Calu3 (cell line): ENCODE measurements at regions of chr2 and their contacts with region 1.

Region 1: DNA sequence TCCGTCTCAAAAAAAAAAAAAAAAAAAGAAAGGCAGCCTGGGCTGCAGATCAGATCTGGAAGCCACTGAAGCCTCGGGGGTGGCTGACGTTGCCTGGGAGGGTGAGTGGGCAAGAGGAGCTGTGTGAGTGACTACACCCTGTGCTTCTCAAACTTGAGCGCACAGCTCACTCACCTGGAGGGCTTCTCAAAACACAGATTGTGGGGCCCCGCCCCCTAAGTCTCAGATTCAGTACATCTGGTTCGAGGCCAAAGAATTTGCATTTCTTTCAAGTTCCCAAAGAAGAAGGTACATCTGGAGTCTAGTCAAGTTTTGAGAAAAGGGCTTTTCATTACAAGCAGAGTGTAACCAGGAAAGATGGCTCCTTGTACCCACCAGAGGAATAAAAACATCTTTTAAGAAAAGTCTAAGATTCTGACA is 97.7 kb upstream of the CAB39 start:
- DNase-seq: no peak
- H3K4me3 Mint-ChIP-seq: no peak overlapping the region
- H3K27ac Mint-ChIP-seq: no peak overlapping the region
- H3K4me1 Mint-ChIP-seq: peaks cover 9% of the 10 kb centered on the region
- H3K27me3 Mint-ChIP-seq: no peaks in the 10 kb centered on the region
- CTCF ChIP-seq: no peak

Region 2: GRCh38 chr2:230007931-230008707 is 606.8 kb before region 1 on chr2:
- CTCF ChIA-PET with region 1: interaction called, 3 read pairs
- intact Hi-C with region 1: loop called (anchors 1 kb)
- DNase-seq: peak; percentile 85
- H3K4me3 Mint-ChIP-seq: no peak overlapping the region
- H3K27ac Mint-ChIP-seq: no peak overlapping the region
- H3K4me1 Mint-ChIP-seq: peaks cover 18% of the 10 kb centered on the region
- H3K27me3 Mint-ChIP-seq: no peaks in the 10 kb centered on the region
- CTCF ChIP-seq: peak; percentile 86

Region 3: DNA sequence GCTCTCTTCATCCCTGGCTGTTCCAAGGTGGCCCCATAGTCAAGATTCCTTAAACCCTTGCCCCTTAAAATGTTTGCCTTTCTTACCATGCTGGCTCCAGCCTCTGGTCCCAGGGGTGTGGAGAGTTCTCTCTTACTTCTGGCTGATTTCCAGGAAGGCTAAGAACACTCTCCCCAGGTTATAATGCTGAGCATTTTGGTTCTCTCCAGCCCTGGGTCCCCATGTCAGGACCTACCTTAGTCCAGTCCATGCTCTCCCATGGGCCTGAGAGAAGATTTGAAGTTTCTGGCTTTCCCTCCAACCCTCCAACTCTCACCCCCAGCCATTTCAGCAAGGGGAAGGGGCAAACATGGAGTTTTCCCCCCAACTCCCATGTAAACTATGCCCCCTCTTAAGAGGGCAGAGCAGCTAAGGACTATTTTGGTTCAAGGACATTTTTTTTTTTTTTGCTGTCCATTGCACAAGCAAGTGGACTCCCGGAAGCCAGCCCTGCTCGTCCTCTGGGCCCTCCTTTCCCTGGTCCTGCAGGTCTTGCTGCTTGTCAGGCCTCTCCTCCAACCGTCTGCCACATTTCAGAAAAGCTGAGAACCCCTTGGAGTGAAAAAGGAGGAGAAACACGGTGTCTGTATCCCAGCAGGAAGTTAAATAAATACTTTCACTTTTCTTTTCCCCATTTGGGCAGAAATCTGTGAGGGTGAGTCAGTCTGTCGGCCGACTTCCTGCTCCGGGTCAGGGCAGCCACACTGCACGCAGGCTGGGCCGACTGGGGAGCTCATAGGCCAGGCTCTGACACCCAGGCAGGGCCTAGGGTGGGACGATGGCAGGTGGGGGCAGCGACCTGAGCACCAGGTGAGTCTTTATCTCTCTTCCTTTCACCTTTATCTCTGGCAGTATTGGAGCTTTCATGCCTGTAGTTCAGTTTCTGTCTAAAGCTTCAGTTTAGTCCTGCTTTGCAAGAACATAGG is 288.2 kb before region 1 on chr2 and contains the start of gene SP140L:
- CTCF ChIA-PET with region 1: no interaction called
- intact Hi-C with region 1: loop called (anchors 10 kb)
- DNase-seq: peak; percentile 82
- H3K4me3 Mint-ChIP-seq: peak within 1 kb of the TSS; percentile 89
- H3K27ac Mint-ChIP-seq: peak within 1 kb of the TSS; percentile 99
- H3K4me1 Mint-ChIP-seq: peaks cover 51% of the 10 kb centered on the region
- H3K27me3 Mint-ChIP-seq: no peaks in the 10 kb centered on the region
- CTCF ChIP-seq: no peak
- total RNA-seq, gene SP140L: 35.4 and 55.2 TPM in 2 replicates

Region 4: GRCh38 chr2:230691005-230691647 is 76.2 kb after region 1 on chr2:
- CTCF ChIA-PET with region 1: no interaction called
- intact Hi-C with region 1: loop called (anchors 5 kb)
- DNase-seq: peak; percentile 64
- H3K4me3 Mint-ChIP-seq: no peak overlapping the region
- H3K27ac Mint-ChIP-seq: no peak overlapping the region
- H3K4me1 Mint-ChIP-seq: peaks cover 43% of the 10 kb centered on the region
- H3K27me3 Mint-ChIP-seq: no peaks in the 10 kb centered on the region
- CTCF ChIP-seq: no peak

Region 5: GRCh38 chr2:230798769-230799399 is 184.0 kb after region 1 on chr2:
- CTCF ChIA-PET with region 1: no interaction called
- intact Hi-C with region 1: loop called (anchors 2 kb)
- DNase-seq: peak; percentile 63
- H3K4me3 Mint-ChIP-seq: no peak overlapping the region
- H3K27ac Mint-ChIP-seq: no peak overlapping the region
- H3K4me1 Mint-ChIP-seq: peaks cover 10% of the 10 kb centered on the region
- H3K27me3 Mint-ChIP-seq: no peaks in the 10 kb centered on the region
- CTCF ChIP-seq: peak; percentile 38